HEK293 (cell line): ENCODE measurements at regions of chr1 and their contacts with region 1.

Region 1: GRCh38 chr1:8238851-8239305 is 79.0 kb upstream of the SLC45A1 start:
- H3K4me3 ChIP-seq: no peak overlapping the region
- H3K27ac ChIP-seq: no peak overlapping the region
- H3K4me1 ChIP-seq: no peaks in the 10 kb centered on the region
- CTCF ChIP-seq: 0 out of 2 replicates have a peak, but pooled peaks have one; percentile 20

Region 2: DNA sequence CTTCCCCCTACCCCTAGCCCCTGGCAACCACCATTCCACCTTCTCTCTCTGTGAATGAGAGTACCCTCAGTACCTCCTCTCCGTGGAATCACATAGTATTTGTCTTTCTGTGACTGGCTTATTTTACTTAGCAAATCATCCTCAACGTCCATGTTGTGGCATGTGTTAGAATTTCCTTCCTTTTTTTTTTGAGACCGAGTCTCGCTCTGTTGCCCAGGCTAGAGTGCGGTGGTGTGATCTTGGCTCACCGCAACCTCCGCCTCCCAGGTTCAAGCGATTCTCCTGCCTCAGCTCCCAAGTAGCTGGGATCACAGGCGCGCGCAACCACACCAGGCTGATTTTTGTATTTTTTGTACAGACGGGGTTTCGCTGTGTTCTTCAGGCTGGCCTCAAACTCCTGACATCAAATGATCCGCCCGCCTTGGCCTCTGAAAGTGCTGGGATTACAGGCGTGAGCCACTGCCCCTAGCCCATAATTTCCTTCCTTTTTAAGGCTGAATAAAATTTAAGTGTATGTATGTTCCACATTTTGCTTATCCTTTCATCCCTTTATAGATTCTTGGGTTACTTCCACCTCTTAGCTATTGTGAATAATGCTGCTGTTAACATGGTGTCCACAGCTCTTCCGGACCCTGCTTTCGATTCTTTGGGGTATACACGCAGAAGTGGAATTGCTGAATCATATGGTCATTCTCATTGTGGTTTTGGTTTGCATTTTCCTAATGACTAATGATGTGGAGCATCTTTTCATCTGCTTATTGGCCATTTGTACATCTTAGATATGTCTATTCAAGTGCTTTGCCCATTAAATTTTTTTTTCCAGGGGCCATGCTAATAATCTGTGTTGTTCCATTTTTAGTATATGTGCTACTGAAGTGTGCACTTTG is 245.0 kb before region 1 on chr1:
- CTCF ChIA-PET with region 1: no interaction called
- POLR2A ChIA-PET with region 1: no interaction called
- H3K4me3 ChIP-seq: no peak overlapping the region
- H3K27ac ChIP-seq: no peak overlapping the region
- H3K4me1 ChIP-seq: no peaks in the 10 kb centered on the region
- CTCF ChIP-seq: no peak

Region 3: GRCh38 chr1:8026153-8026975 is 212.5 kb before region 1 on chr1 and contains the start of gene ERRFI1:
- CTCF ChIA-PET with region 1: interaction called, 12 read pairs
- POLR2A ChIA-PET with region 1: no interaction called
- H3K4me3 ChIP-seq: peak within 1 kb of the TSS; percentile 85
- H3K27ac ChIP-seq: peak within 1 kb of the TSS; percentile 67
- H3K4me1 ChIP-seq: peaks cover 27% of the 10 kb centered on the region
- CTCF ChIP-seq: peak; percentile 6; the same call in 1 of the 2 replicates

Region 4: DNA sequence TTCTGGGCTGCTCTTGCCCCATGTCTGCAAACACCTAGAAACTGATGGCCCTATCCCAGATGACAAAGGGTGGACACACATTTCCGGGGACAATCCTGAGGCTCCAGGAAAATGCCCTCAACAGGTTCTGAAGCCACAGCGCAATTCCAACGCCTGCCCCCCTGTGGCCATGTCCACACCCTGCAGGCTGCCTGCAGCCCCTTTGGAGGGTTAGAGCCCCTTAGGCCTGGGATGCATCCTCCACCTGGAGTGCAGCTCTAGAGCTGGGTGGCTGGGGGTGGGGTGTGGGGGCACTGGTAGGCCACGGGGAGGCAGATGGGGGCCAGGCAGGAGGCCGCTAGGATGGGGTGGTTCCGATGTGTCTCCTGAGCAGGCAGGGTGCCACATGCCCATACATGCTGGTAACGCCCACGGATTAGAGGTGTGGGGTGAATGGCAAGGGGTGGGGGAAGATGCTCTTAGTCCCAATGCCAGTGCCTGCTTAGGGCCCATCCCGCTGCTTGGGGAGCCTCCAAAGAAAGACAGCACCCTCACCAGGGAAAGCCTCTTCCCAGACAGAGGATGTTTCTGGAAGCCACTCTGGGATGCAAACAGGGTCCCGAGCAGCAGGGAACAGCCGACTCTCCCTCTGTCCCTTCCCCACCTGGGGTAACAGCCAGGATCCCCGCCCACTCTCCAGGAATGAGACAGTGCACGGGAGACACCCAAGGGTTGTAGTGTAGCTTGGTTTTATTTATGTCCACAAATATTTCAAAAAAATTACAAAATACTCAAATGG is 113.0 kb after region 1 on chr1:
- CTCF ChIA-PET with region 1: no interaction called
- POLR2A ChIA-PET with region 1: no interaction called
- H3K4me3 ChIP-seq: no peak overlapping the region
- H3K27ac ChIP-seq: no peak overlapping the region
- H3K4me1 ChIP-seq: no peaks in the 10 kb centered on the region
- CTCF ChIP-seq: 0 out of 2 replicates have a peak, but pooled peaks have one; percentile 29

Region 5: DNA sequence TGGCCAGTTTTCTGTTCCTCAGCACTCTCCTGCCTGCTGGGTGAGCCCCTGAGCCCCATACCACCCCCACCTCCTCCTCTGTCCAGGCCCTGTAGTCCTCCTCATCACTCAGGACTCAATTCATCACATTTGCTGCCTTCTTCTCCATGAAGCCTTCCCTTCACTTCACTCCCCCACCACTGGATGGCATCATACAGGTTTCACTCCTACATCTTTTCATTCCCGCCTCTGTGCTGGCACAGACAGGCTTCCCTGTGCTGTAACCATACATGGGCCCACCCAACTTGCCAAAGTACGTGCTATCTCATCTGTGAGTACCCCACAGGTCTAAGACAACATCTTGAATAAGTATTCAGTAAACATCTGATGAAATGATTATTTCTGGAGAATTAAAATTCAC is 135.9 kb after region 1 on chr1:
- CTCF ChIA-PET with region 1: no interaction called
- POLR2A ChIA-PET with region 1: no interaction called
- H3K4me3 ChIP-seq: no peak overlapping the region
- H3K27ac ChIP-seq: no peak overlapping the region
- H3K4me1 ChIP-seq: peaks cover 14% of the 10 kb centered on the region
- CTCF ChIP-seq: peak; percentile 66; the same call in 1 of the 2 replicates

Region 6: DNA sequence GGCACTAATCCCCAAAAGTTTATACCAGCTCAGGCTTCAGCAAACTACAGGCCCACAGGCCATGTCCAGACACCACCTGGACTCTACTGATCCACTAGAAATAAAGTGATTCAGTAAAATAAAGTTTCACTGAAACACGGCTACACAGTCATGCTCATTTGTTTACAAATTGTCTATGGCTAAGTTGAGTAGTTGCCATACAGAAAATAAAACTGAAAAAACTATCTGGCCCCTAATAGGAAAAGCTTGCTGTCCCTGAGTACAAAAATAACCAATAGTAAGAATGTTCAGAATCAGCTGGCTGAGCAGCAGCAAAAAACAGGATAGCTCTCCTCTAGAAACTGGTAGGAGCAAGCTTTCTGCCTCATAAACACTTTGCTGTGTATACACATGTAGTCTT is 357.1 kb after region 1 on chr1:
- CTCF ChIA-PET with region 1: interaction called, 10 read pairs
- POLR2A ChIA-PET with region 1: no interaction called
- H3K4me3 ChIP-seq: no peak overlapping the region
- H3K27ac ChIP-seq: no peak overlapping the region
- H3K4me1 ChIP-seq: 0 out of 2 replicates have a peak, but pooled peaks cover 9% of the 10 kb centered on the region
- CTCF ChIP-seq: no peak